Activated T-helper 2 cell treated with anti-CD3 and anti-CD28 coated beads, Interferon-gamma antibody, Interleukin-2, Interleukin-4, amounts not matched to agents 10 μg/mL and 5 μg/mL and 100 μg/mL, durations not matched to agents 14 hours and 24 hours and 36 hours (primary cell): ENCODE measurements at regions of chr4 and their contacts with region 1.

Region 1: DNA sequence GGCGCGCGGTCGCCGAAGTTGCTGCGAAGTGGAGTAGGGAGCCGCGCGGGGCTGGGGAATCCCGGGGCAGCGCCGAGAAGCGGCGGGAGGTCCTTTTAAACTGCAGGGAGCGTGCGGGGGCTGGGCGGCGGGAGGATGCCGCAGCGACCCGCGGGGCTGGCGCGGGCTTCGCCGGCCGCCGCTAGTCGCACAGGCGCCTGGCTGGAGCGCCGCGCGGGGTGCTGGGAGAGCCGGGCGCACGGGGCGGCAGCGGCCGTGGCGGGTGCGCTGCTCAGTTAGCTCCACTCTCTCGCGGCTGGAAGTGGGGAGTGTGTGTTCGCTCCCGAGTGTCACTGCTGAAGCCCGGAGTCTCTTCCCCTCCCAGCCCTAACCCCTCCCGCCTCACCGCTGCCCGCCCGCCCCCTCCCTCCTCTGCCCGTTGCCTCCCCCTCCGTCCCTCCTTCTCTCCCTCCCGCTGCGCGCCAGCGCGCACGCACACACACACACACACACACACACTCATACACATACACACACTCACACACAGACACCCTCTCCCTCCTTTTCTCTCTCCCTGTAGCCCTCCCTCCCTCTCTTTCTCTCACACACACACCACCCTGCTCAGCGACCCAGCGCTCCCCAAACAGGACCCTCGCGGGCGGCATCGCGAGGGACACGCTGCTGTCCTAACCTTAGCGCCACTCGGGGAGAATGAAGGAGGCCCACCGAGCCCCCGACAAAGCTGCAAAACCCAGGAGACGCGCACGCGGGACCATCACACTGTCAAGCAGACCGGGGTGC is at the start of gene NDNF:
- DNase-seq: peak; percentile 23
- H3K4me3 Mint-ChIP-seq: peak within 1 kb of the TSS; percentile 78
- H3K27ac Mint-ChIP-seq: no peak within 1 kb of the TSS
- H3K4me1 Mint-ChIP-seq: peaks cover 18% of the 10 kb centered on the region
- H3K27me3 Mint-ChIP-seq: peaks cover 73% of the 10 kb centered on the region
- total RNA-seq, gene NDNF: 0.55 and 0.78 TPM in 2 replicates

Region 2: GRCh38 chr4:120922381-120923206 is 149.8 kb before region 1 on chr4 and contains the start of gene PRDM5:
- intact Hi-C with region 1: loop called (anchors 10 kb)
- DNase-seq: no peak
- H3K4me3 Mint-ChIP-seq: peak within 1 kb of the TSS; percentile 71
- H3K27ac Mint-ChIP-seq: peak within 1 kb of the TSS; percentile 53
- H3K4me1 Mint-ChIP-seq: peaks cover 11% of the 10 kb centered on the region
- H3K27me3 Mint-ChIP-seq: peaks cover 61% of the 10 kb centered on the region
- total RNA-seq, gene PRDM5: 0.18 TPM in 1 of 2 replicates, not detected in the other

Region 3: DNA sequence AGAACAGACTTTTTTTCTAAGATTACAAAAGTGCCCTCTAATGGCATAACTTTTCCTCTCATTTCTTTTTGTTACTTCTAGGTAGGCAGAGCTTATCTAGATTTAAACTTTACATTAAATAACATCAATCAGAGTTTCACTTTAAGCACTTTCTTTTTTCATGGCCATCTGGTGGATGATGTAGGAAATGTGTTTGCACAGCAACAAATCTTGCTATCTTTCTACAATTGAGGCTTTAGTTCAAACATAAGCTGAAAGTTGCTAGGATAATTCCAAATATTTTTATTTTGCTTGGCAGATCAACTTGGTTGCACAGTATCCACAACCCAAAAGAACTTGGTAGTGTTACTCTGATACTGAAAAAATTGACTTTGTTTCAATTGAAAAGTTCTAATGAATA is 22.1 kb before region 1 on chr4:
- intact Hi-C with region 1: no loop called
- DNase-seq: no peak
- H3K4me3 Mint-ChIP-seq: no peak overlapping the region
- H3K27ac Mint-ChIP-seq: no peak overlapping the region
- H3K4me1 Mint-ChIP-seq: peaks cover 5% of the 10 kb centered on the region
- H3K27me3 Mint-ChIP-seq: peaks cover 53% of the 10 kb centered on the region

Region 4: DNA sequence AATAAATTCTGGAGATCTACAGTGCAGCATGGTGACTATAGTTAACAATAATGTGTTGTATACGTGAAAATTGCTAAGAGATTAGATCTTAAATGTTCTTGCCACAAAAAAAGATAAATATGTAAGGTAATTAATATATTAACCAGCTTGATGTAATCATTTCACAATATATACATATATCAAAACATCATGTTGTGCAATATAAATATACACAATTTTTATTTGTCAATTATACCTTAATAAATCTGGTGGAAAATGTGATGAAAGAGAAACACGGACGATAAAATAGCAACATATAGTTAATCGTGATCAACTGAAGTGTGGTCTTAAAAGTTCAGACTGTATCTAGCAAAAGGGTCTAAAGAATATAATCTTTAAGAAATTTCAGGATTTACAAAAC is 16.5 kb after region 1 on chr4:
- intact Hi-C with region 1: no loop called
- DNase-seq: no peak
- H3K4me3 Mint-ChIP-seq: no peak overlapping the region
- H3K27ac Mint-ChIP-seq: no peak overlapping the region
- H3K4me1 Mint-ChIP-seq: no peaks in the 10 kb centered on the region
- H3K27me3 Mint-ChIP-seq: peaks cover 31% of the 10 kb centered on the region

Region 5: DNA sequence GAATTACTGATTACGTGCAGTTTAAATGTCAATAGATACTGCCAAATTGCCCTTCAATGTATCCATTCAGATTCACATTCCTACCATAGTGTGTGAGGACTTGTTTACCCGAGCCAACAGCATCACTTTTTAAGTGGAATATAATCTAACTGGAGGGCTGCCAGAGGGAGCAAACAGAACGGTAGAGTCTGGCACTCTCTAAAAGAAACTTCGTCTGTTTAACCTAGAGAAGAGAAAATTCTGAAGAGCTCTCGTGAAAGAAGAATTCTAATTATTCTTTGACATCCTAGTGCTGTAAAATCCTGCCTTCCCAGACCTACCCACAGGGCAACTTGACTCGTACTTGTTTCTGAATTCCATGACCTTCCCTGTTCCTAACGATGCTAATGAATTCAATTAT is 669.4 kb after region 1 on chr4:
- intact Hi-C with region 1: no loop called
- DNase-seq: no peak
- H3K4me3 Mint-ChIP-seq: no peak overlapping the region
- H3K27ac Mint-ChIP-seq: no peak overlapping the region
- H3K4me1 Mint-ChIP-seq: no peaks in the 10 kb centered on the region
- H3K27me3 Mint-ChIP-seq: peaks cover 16% of the 10 kb centered on the region